A549 (cell line): ENCODE measurements at regions of chr11 and their contacts with region 1.

Region 1: DNA sequence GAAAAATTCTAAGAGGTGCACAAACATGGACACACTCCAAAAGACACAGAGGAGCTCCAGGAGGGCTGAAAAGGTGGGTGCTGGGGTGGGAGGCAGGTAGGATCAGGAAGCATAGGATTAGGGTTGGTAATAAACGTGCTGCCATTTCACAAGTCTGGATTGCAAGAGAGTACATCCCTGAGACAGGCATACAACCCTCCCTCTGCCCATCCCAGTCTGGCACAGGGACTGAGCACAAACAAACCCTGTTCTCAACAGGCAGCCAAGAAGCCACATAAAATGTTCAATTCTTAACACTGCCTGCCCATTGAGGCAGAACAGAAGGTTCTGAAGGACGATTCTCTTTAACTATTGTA is 18.5 kb downstream of the SLC35F2 start:
- DNase-seq: peak in 1 of 2 experiments; percentile 41
- ATAC-seq: peak; percentile 74 to 81
- H3K4me3 ChIP-seq: peak overlapping the region; percentile 33
- H3K27ac ChIP-seq: peak overlapping the region; percentile 94
- H3K4me1 ChIP-seq: peaks cover 60% of the 10 kb centered on the region
- CTCF ChIP-seq: no peak
- EP300 ChIP-seq: no peak
- POLR2A ChIP-seq: no peak
- RAD21 ChIP-seq: no peak

Region 2: DNA sequence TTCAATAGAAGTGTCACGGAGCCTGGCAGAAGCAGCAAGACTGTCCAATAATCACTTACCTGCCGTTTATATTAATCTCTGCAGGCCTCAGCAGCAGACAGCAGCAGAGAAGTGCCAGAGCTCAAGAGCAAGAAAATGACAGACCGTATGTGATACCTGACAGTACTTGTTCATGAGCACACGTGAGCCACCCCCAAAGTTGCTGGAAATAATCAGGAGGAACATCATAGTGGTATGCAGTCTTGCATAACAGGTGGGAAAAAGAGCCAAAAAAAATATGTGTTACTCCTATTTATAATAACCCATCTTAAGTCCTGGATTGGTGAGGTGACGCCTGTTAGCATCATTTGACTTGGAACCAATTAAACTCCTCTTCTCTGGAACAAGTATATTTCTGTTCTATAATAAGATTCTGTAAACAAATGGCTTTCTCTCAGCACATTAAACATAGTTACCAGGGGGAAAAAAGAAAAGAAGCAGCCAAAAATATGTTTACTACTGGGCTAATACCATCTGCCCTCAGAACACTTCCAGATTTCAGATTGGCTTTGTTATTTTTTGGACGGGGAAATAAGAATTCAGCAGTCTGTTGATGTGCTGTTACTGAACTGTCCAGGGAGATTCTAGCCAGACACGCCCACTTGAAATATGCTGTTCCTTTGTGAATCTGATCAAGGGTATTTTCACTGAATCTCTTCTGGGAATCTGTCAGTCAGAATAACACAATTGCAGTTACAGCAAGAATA is 120.4 kb before region 1 on chr11:
- CTCF ChIA-PET with region 1: no interaction called
- POLR2A ChIA-PET with region 1: no interaction called
- DNase-seq: no peak
- ATAC-seq: peak in 1 of 2 experiments; percentile 50; a peak in 1 of 6 replicates
- H3K4me3 ChIP-seq: no peak overlapping the region
- H3K27ac ChIP-seq: no peak overlapping the region
- H3K4me1 ChIP-seq: 0 out of 3 replicates have a peak, but pooled peaks cover 7% of the 10 kb centered on the region
- CTCF ChIP-seq: no peak
- EP300 ChIP-seq: no peak
- POLR2A ChIP-seq: no peak
- RAD21 ChIP-seq: no peak

Region 3: GRCh38 chr11:107858217-107859070 is 18.3 kb after region 1 on chr11 and contains the start of gene SLC35F2:
- CTCF ChIA-PET with region 1: interaction called, 5 read pairs
- POLR2A ChIA-PET with region 1: interaction called, 13 read pairs
- DNase-seq: peak; percentile 55 to 80
- ATAC-seq: peak; percentile 94 to 95
- H3K4me3 ChIP-seq: peak within 1 kb of the TSS; percentile 82
- H3K27ac ChIP-seq: peak within 1 kb of the TSS; percentile 91 to 95
- H3K4me1 ChIP-seq: peaks cover 9% of the 10 kb centered on the region; the same call in 2 of the 3 replicates
- CTCF ChIP-seq: peak; percentile 14; the same call in 1 of the 3 replicates
- EP300 ChIP-seq: no peak
- POLR2A ChIP-seq: peak; percentile 44
- RAD21 ChIP-seq: no peak
- polyA plus RNA-seq, gene SLC35F2: 27.0 and 30.0 TPM in 2 replicates